ENCODE measurements at regions of chr9 and their contacts with region 1.

Region 1: DNA sequence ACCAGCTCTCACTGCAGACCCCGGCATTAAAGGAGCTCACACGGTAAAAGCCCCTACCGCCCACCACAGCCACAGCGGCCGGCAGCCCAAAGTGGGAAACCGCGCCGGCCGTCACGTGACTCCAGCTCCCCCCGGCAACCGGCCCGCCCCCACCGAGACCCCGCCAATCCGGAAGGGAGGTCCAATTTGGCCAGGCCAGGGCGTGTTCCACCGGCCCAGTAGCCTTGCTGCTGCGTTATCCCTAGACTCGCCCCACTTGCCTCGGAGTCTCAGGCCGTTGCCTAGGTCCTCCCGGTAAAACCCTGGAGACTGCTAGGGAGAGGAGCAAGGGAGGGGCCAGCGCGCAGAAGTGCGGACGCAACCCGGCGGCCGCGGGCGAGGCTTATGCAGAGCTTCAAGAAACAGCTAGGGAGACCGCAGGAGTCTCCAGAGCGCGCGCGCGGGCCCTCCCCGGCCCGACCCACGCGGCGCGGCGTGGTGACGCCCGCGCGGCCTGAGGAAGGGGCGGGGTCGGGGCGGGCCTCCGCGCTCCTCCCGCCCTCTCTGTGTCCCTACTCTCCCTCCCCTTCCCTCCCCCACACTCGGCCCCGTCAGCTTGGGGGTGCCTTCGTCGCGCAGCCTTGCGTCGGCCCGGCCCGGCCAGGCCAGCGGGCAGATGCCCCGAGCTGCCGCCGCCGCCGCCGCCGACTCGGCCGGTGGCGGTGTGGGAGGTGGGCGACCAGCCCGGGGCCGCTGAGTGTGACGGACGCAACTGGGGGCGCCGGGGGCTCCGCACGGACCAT is at the start of gene RIC1:
- DNase-seq: peak; percentile 94
- H3K4me3 Mint-ChIP-seq: peak within 1 kb of the TSS; percentile 98
- H3K27ac Mint-ChIP-seq: peak within 1 kb of the TSS; percentile 100
- H3K4me1 Mint-ChIP-seq: peaks cover 62% of the 10 kb centered on the region
- H3K27me3 Mint-ChIP-seq: no peaks in the 10 kb centered on the region
- total RNA-seq, gene RIC1: 14.1 to 15.0 TPM

Region 2: GRCh38 chr9:4679268-4680172 is 949.2 kb before region 1 on chr9 and contains the start of gene CDC37L1:
- CTCF ChIA-PET with region 1: no interaction called
- POLR2A ChIA-PET with region 1: no interaction called
- intact Hi-C with region 1: loop called (anchors 5 kb)
- DNase-seq: peak; percentile 99
- H3K4me3 Mint-ChIP-seq: no peak within 1 kb of the TSS
- H3K27ac Mint-ChIP-seq: no peak within 1 kb of the TSS
- H3K4me1 Mint-ChIP-seq: peaks cover 10% of the 10 kb centered on the region
- H3K27me3 Mint-ChIP-seq: no peaks in the 10 kb centered on the region
- total RNA-seq, gene CDC37L1: 9.7 to 11.0 TPM

Region 3: DNA sequence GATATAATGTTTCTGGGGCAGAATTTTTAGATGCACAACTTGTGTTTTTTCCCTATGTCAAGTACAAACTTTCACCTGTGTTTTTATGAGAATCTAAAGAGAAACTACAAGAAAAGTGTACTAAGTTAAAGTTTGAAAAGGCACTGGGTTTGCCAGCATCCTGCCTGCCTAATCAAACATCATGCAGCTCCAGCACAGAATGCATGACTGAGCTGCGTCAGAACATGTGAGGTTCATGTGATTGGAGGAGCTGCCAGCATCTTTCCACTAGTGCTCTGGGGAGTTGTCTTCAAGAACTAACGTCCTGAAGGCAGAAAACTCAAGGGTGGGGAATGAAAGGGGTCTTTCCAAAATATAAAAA is 45.9 kb before region 1 on chr9:
- CTCF ChIA-PET with region 1: interaction called, 3 read pairs
- POLR2A ChIA-PET with region 1: interaction called, 3 read pairs
- intact Hi-C with region 1: loop called (anchors 2 kb)
- DNase-seq: peak; percentile 61
- H3K4me3 Mint-ChIP-seq: no peak overlapping the region
- H3K27ac Mint-ChIP-seq: peak overlapping the region; percentile 80
- H3K4me1 Mint-ChIP-seq: peaks cover 66% of the 10 kb centered on the region
- H3K27me3 Mint-ChIP-seq: no peaks in the 10 kb centered on the region

Region 4: DNA sequence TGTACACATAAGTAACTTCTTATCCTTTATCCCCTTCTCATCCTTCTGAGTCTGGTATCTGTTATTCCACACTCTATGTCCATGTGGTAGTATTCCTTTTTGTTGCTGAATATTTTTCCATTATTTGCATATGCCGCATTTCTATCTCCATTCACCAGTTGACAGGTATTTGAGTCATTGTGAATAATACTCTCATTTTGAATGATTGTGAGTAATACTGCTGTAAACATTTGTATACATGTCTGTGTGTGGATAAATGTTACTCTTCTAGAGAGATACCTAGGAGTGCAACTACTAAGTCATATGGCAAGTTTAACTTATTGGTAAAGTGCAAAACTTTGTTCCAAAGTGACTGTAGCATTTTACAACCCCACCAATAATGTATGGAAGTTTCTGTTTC is 15.8 kb after region 1 on chr9:
- CTCF ChIA-PET with region 1: interaction called, 3 read pairs
- POLR2A ChIA-PET with region 1: interaction called, 4 read pairs
- intact Hi-C with region 1: loop called (anchors 1 kb)
- DNase-seq: no peak
- H3K4me3 Mint-ChIP-seq: no peak overlapping the region
- H3K27ac Mint-ChIP-seq: peak overlapping the region; percentile 10
- H3K4me1 Mint-ChIP-seq: peaks cover 36% of the 10 kb centered on the region
- H3K27me3 Mint-ChIP-seq: no peaks in the 10 kb centered on the region

Region 5: DNA sequence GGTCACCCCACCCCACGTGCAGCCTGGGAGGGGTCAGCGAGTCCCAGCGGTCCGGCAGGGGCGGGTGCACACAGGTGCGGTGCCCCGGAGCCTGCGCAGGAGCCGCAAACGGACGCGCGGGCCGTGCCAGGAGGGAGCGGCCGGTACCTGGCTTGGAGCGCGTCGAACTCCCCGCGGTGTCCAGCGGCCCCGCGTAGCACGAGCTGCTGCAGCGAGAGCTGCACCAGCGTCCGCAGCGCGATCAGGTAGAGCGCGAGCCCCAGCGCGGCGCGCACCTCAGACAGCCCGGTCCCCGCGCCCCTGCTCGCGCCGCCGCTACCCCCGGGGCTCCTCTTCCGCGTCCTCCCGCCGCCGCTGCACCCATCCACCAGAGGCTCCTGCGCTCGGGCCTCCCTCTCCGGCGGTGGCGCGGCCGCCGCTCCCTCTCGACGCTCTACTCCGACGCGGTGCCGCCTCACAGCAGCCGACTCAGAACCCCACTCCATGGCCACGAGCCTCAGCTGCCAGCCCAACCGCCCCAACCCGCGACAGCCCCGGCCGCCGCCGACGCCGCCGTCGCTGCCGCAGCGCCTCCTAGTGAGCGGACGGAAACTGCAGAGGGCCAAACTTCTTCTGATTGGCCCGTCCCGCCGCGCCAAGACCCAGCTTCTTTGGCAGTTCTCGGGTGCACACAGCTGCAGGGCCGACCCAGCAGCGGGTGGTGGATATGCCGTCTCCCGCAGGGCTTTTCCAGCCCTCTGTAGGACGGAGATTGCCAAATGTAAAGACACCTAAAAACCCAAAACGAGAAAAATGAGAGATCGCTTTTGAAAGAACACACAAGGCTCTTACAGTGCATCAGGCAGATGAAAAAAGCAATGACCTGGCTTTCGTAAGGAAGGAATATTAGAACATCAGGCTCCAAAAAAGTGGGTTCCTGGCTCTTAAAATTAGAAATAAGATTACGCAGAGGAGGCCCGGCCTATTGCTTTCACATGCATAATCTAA is 204.1 kb after region 1 on chr9 and contains the start of gene ERMP1:
- CTCF ChIA-PET with region 1: interaction called, 6 read pairs
- POLR2A ChIA-PET with region 1: interaction called, 5 read pairs
- intact Hi-C with region 1: loop called (anchors 2 kb)
- DNase-seq: peak; percentile 94
- H3K4me3 Mint-ChIP-seq: peak within 1 kb of the TSS; percentile 86
- H3K27ac Mint-ChIP-seq: peak within 1 kb of the TSS; percentile 65
- H3K4me1 Mint-ChIP-seq: peaks cover 42% of the 10 kb centered on the region
- H3K27me3 Mint-ChIP-seq: no peaks in the 10 kb centered on the region
- total RNA-seq, gene ERMP1: 23.2 to 24.0 TPM

Region 6: GRCh38 chr9:6412487-6413364 is 784.0 kb after region 1 on chr9 and contains the start of gene UHRF2:
- CTCF ChIA-PET with region 1: no interaction called
- POLR2A ChIA-PET with region 1: no interaction called
- intact Hi-C with region 1: loop called (anchors 5 kb)
- DNase-seq: peak; percentile 100
- H3K4me3 Mint-ChIP-seq: peak within 1 kb of the TSS; percentile 80
- H3K27ac Mint-ChIP-seq: peak within 1 kb of the TSS; percentile 94
- H3K4me1 Mint-ChIP-seq: peaks cover 26% of the 10 kb centered on the region
- H3K27me3 Mint-ChIP-seq: no peaks in the 10 kb centered on the region
- total RNA-seq, gene UHRF2: 59.5 to 62.9 TPM